Activated CD4-positive, alpha-beta memory T cell treated with anti-CD3 and anti-CD28 coated beads, Interleukin-2, amount 10 ng/mL, durations not matched to agents 7 days and 5 days (primary cell): ENCODE measurements at regions of chr17 and their contacts with region 1.

Region 1: GRCh38 chr17:42221937-42222745 is 27.8 kb upstream of the GHDC start:
- DNase-seq: peak; percentile 64
- H3K4me3 Mint-ChIP-seq: no peak overlapping the region
- H3K27ac Mint-ChIP-seq: peak overlapping the region; percentile 37
- H3K4me1 Mint-ChIP-seq: no peaks in the 10 kb centered on the region
- H3K27me3 Mint-ChIP-seq: no peaks in the 10 kb centered on the region

Region 2: DNA sequence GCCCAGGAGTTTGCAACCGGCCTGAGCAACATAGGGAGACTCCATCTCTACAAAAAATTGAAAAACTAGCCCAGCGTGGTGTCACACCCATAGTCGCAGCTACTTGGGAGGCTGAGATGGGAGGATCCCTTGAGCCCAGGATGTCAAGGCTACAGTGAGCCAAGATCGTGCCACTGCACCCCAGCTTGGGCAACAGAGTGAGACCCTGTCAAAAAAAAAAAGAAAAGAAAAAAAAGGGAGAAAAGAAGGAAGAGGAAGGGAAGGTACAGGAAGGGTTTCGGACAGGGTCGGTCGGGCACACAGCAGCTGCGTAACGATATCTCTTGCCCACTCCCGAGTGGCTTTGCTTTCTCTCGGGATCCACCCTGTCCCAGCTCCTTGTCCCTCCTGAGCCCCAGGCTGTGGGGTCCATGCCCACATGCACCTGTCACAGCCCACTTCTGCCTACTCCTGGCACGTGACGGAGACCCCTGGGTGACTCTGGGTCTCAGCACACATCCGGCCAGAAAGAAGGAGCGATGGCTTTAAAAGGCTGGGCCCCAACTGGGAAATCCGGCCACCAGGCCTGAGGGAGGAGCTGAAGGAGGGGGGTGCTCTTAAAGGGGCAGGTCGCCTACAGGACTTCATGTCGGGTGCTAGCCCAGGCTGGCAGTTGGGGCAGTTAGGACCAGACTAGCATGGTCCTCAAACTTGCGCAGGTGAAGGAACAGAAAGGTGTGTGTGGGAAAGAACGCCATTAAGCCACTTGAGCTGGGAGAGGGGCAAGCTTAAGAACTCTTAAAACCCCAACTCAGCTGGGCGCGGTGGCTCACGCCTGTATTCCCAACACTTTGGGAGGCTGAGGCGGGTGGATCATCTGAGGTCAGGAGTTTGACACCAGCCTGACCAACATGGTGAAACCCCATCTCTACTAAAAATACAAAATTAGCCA is 27.9 kb before region 1 on chr17 and contains the start of gene GHDC:
- CTCF ChIA-PET with region 1: interaction called, 13 read pairs
- POLR2A ChIA-PET with region 1: interaction called, 7 read pairs
- DNase-seq: peak; percentile 86
- H3K4me3 Mint-ChIP-seq: peak within 1 kb of the TSS; percentile 87
- H3K27ac Mint-ChIP-seq: peak within 1 kb of the TSS; percentile 84
- H3K4me1 Mint-ChIP-seq: peaks cover 21% of the 10 kb centered on the region
- H3K27me3 Mint-ChIP-seq: no peaks in the 10 kb centered on the region
- total RNA-seq, gene GHDC: 17.3 to 19.1 TPM

Region 3: GRCh38 chr17:42266918-42267778 is 45.0 kb after region 1 on chr17:
- CTCF ChIA-PET with region 1: interaction called, 10 read pairs
- POLR2A ChIA-PET with region 1: interaction called, 6 read pairs
- DNase-seq: peak; percentile 56
- H3K4me3 Mint-ChIP-seq: no peak overlapping the region
- H3K27ac Mint-ChIP-seq: peak overlapping the region; percentile 66
- H3K4me1 Mint-ChIP-seq: peaks cover 57% of the 10 kb centered on the region
- H3K27me3 Mint-ChIP-seq: no peaks in the 10 kb centered on the region

Region 4: GRCh38 chr17:42287926-42288802 is 66.0 kb after region 1 on chr17 and contains the start of gene STAT5A:
- CTCF ChIA-PET with region 1: interaction called, 27 read pairs
- POLR2A ChIA-PET with region 1: interaction called, 23 read pairs
- DNase-seq: peak; percentile 86
- H3K4me3 Mint-ChIP-seq: peak within 1 kb of the TSS; percentile 89
- H3K27ac Mint-ChIP-seq: peak within 1 kb of the TSS; percentile 86
- H3K4me1 Mint-ChIP-seq: peaks cover 59% of the 10 kb centered on the region
- H3K27me3 Mint-ChIP-seq: no peaks in the 10 kb centered on the region
- total RNA-seq, gene STAT5A: 88.4 to 96.7 TPM

Region 5: GRCh38 chr17:42405963-42406495 is 183.9 kb after region 1 on chr17:
- CTCF ChIA-PET with region 1: interaction called, 18 read pairs
- POLR2A ChIA-PET with region 1: no interaction called
- DNase-seq: peak; percentile 82
- H3K4me3 Mint-ChIP-seq: no peak overlapping the region
- H3K27ac Mint-ChIP-seq: no peak overlapping the region
- H3K4me1 Mint-ChIP-seq: peaks cover 10% of the 10 kb centered on the region
- H3K27me3 Mint-ChIP-seq: peaks cover 23% of the 10 kb centered on the region